ENCODE measurements at regions of chr1 and their contacts with region 1.

Region 1: DNA sequence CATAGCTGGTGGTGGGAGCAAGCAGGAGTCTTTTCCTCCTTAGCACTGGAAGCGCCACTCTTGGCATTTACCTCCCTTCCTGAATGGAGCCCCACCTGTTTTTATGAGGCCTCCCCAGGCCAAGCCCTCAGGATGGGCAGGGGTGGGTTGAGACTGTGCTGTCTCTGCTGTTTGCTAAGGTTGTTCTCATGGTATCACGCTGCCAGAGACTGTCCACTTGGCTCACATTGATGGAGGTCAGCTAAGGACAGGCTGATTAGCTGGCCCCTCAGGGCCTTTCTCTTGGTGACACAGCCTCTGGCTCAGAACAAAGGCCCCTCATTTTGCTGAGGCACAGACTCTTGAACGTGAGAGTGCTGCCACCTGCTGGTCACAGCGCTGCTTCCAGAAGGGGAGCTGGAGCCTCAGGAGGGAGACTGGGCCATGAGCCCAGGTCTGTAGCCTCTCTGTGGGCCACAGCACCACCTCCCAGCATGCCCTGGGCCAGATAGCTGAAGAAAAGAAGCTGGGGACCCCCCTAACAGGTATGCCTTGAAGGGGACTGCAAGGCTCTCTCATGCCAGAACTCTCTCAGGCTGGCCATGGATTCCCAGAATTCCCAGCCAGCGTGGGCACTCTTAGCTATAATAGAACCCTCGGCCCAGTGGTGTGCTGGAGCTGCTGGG is 85.6 kb downstream of the CD58 start:
- DNase-seq: peak; percentile 82
- CTCF ChIP-seq: peak; percentile 95

Region 2: DNA sequence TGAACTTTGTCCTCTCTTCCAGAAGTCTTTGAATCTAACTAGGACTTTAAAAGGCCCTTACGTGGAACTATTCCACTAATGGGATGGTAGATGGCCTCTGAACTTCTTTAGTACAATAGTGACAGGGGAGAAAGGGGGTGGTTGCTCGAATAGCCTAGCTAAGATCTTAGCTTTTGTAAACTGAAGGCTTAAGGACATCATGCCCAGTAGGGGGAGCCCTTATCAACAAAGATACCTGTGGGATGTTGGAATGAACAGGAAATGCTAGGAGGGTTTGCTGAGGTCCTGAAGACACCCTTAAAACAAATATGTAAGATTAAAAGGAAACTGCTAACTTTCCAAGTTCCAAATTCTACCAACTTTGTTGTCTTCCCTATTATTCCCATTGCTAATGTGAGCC is 677.5 kb before region 1 on chr1:
- in situ Hi-C with region 1: loop called (anchors 25 kb)
- DNase-seq: peak; percentile 41
- CTCF ChIP-seq: peak; percentile 55

Region 3: GRCh38 chr1:116133696-116134650 is 351.2 kb before region 1 on chr1:
- in situ Hi-C with region 1: loop called (anchors 10 kb)
- DNase-seq: no peak
- CTCF ChIP-seq: peak; percentile 17

Region 4: GRCh38 chr1:116360429-116361173 is 124.6 kb before region 1 on chr1:
- in situ Hi-C with region 1: loop called (anchors 10 kb)
- DNase-seq: no peak
- CTCF ChIP-seq: no peak

Region 5: DNA sequence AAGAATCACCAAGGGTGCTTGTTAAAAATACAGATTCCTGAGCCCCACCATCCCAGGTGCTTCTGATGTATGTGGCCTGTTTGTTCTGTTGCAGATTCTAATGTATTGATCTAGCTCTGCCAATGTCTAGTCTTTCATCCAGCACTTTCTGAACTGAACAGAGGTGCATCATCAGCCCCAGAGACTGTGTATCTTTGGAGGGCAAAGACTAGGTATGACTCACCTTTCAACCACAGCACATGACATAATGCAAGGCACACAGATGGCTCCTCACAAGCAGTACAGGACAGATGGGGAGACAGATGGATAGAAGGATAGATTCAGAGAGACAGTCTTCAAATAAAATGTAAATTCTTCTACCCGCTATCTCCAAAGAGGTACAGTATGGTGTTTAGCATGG is 53.3 kb after region 1 on chr1:
- in situ Hi-C with region 1: no loop called
- DNase-seq: no peak
- CTCF ChIP-seq: no peak